Activated CD4-positive, alpha-beta T cell treated with anti-CD3 and anti-CD28 coated beads, Interleukin-2, amount 10 ng/mL, durations not matched to agents 24 days and 14 days (primary cell): ENCODE measurements at regions of chr6 and their contacts with region 1.

Region 1: DNA sequence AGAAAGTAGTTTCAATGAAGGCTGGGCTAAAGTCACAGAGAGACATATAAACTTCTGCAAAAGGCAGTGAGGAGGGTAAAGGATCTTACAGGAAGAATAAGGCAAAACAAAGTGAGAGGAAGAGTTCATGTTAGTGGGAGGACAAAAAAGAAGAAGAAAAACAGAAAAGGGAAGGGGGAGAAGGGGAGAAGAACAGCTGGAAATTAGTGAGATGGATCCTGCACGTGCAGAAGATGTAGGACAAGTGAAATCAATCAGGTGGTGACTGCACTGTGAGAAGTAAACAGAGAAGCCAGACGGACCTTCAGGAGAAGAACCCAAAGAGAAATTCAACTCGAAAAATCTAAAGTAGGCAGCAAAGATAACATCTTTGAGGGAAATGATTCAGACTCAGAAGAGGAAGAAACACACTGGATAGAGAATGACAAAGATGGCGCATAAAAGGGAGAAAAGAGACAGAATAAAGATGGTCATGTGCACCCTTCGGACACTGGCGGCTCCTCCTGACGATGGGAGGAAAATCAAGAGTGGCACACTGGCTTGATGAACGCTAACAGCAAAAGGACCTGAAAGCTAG is 105.9 kb downstream of the MYB start:
- DNase-seq: no peak
- H3K4me3 Mint-ChIP-seq: no peak overlapping the region
- H3K27ac Mint-ChIP-seq: peak overlapping the region; percentile 74
- H3K4me1 Mint-ChIP-seq: peaks cover 7% of the 10 kb centered on the region
- H3K27me3 Mint-ChIP-seq: no peaks in the 10 kb centered on the region

Region 2: GRCh38 chr6:134413241-134413643 is 873.8 kb before region 1 on chr6:
- intact Hi-C with region 1: no loop called
- DNase-seq: no peak
- H3K4me3 Mint-ChIP-seq: no peak overlapping the region
- H3K27ac Mint-ChIP-seq: no peak overlapping the region
- H3K4me1 Mint-ChIP-seq: peaks cover 16% of the 10 kb centered on the region
- H3K27me3 Mint-ChIP-seq: no peaks in the 10 kb centered on the region

Region 3: DNA sequence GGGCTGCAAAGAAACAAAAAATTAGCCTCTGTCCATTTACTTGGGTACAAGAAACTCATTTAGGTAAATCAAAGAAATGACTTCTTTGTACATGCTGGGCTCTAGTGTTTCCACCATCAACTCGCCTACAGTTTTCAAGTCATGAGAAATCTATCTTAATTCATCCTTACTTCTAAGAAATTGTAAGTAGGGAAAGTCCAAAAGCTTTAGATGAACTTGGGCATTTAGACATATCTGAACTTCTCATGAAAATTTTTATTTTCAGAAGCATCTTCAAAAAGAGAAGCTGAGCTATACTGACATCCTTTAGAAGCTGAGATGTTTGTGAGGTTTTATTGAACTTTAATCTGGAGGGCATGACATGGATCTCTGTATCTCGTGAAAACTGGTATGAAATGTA is 11.4 kb after region 1 on chr6:
- intact Hi-C with region 1: loop called (anchors 1 kb)
- DNase-seq: no peak
- H3K4me3 Mint-ChIP-seq: peak overlapping the region; percentile 9
- H3K27ac Mint-ChIP-seq: peak overlapping the region; percentile 80
- H3K4me1 Mint-ChIP-seq: peaks cover 18% of the 10 kb centered on the region
- H3K27me3 Mint-ChIP-seq: no peaks in the 10 kb centered on the region